Naive thymus-derived CD4-positive, alpha-beta T cell (primary cell): ENCODE measurements at regions of chr9 and their contacts with region 1.

Region 1: DNA sequence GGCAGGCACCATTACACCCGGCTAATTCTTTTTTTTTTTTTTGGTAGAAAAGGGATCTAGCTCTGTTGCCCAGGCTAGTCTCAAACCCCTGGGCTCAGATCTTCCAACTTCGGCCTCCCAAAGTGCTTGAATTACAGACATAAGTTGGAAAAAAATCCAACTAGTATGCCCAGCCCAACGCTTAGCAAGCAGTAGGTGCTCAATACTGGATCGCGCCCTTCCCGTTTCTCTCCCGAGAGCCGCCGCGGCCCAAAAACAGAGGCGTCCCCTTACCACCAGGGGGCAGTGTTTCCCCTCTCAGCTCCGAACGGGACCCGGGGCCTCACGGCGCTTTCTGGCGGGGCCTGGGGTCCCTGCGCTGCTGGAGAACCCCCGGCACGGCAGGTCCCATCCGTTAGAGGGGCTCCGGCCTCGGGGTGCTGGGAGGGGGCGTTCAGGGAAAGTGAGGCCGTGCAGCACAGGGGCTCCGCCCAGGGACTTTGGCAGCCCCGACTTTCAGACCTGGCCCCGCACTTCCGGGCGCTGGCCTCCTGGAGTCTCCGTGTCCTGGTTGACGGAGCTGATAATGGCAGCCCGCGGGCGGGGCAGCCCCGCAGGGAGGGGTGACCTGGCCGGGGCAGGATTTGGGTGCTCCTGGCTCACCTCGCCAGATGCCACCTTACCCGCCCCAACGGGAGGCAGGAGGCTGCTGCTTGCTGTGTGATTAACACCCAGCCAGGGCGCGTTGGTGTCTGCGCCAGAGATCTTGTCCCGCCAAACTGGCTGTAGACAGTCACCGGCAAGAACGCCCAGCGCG is 15.2 kb downstream of the PTGES start:
- DNase-seq: peak; percentile 73 to 95 (median 87)
- ATAC-seq: peak; percentile 96
- H3K4me3 ChIP-seq: peak overlapping the region; percentile 91
- H3K4me3 Mint-ChIP-seq: peak overlapping the region; percentile 66 to 84 (median 78)
- H3K27ac ChIP-seq: peak overlapping the region; percentile 76
- H3K27ac Mint-ChIP-seq: peak overlapping the region; percentile 50 to 94 (median 71)
- H3K4me1 ChIP-seq: peaks cover 6% of the 10 kb centered on the region in 2 donors
- H3K4me1 Mint-ChIP-seq: peaks cover 0 to 12% (median 8%) of the 10 kb centered on the region in 7 donors
- H3K27me3 ChIP-seq: no peaks in the 10 kb centered on the region
- H3K27me3 Mint-ChIP-seq: peaks cover 0 to 2% (median 0%) of the 10 kb centered on the region in 5 donors

Region 2: GRCh38 chr9:128972956-128973355 is 764.7 kb before region 1 on chr9:
- CTCF ChIA-PET with region 1: no interaction called
- POLR2A ChIA-PET with region 1: no interaction called
- intact Hi-C with region 1: no loop called
- DNase-seq: no peak
- ATAC-seq: no peak
- H3K4me3 ChIP-seq: no peak overlapping the region
- H3K4me3 Mint-ChIP-seq: no peak overlapping the region
- H3K27ac ChIP-seq: no peak overlapping the region
- H3K27ac Mint-ChIP-seq: peak overlapping the region in 1 of 9 donors; percentile 20
- H3K4me1 ChIP-seq: no peaks in the 10 kb centered on the region
- H3K4me1 Mint-ChIP-seq: peaks cover 0 to 10% (median 0%) of the 10 kb centered on the region in 7 donors
- H3K27me3 ChIP-seq: no peaks in the 10 kb centered on the region
- H3K27me3 Mint-ChIP-seq: no peaks in the 10 kb centered on the region

Region 3: GRCh38 chr9:129726322-129727160 is 11.1 kb before region 1 on chr9:
- CTCF ChIA-PET with region 1: interaction called, 19 read pairs
- POLR2A ChIA-PET with region 1: interaction called, 6 read pairs
- intact Hi-C with region 1: no loop called
- DNase-seq: peak; percentile 30 to 73 (median 56)
- ATAC-seq: peak; percentile 95
- H3K4me3 ChIP-seq: no peak overlapping the region
- H3K4me3 Mint-ChIP-seq: peak overlapping the region in 9 of 10 donors; percentile 16 to 63 (median 55)
- H3K27ac ChIP-seq: no peak overlapping the region
- H3K27ac Mint-ChIP-seq: no peak overlapping the region
- H3K4me1 ChIP-seq: no peaks in the 10 kb centered on the region
- H3K4me1 Mint-ChIP-seq: peaks cover 0 to 4% (median 3%) of the 10 kb centered on the region in 7 donors
- H3K27me3 ChIP-seq: no peaks in the 10 kb centered on the region
- H3K27me3 Mint-ChIP-seq: peaks cover 0 to 23% (median 5%) of the 10 kb centered on the region in 5 donors

Region 4: DNA sequence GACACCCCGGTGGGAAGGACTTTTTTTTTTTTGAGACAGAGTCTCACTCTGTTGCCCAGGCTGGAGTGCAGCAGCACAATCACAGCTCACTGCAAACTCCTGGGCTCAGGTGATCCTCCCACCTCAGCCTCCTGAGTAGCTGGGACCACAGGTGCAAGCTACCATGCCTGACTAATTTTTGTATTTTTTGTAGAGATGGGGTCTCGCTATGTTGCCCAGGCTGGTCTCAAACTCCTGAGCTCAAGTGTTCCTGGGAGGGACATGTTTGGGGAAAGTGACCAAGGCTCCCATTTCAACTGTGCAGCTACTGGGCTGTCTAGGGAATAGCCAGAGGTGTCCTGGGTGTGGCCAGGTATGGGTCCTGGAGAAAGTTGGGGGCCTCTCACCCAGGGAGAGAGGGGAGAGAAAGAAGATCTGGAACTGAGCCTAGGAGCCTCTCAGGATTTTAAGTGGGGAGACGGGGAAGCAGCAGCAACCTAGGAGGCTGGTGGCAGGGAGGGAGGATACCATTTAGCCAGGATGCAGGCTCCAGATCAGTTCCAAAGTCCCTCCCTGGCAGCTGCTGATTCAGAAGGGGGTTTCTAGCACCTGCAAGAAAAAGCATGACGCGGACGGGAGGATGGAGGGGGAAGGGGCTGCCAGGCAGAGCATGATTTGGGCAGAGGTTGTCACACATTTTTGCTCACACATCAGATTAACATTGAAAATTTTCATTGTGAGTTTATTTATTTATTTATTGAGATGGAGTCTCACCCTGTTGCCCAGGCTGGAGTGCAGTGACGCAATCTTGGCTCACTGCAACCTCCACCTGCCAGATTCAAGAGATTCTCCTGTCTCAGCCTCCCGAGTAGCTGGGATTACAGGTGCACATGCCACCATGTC is 58.6 kb after region 1 on chr9:
- CTCF ChIA-PET with region 1: interaction called, 4 read pairs
- POLR2A ChIA-PET with region 1: no interaction called
- intact Hi-C with region 1: loop called in 1 of 2 experiments (anchors 2 kb)
- DNase-seq: no peak
- ATAC-seq: no peak
- H3K4me3 ChIP-seq: no peak overlapping the region
- H3K4me3 Mint-ChIP-seq: no peak overlapping the region
- H3K27ac ChIP-seq: no peak overlapping the region
- H3K27ac Mint-ChIP-seq: no peak overlapping the region
- H3K4me1 ChIP-seq: no peaks in the 10 kb centered on the region
- H3K4me1 Mint-ChIP-seq: peaks cover 0 to 2% (median 0%) of the 10 kb centered on the region in 7 donors
- H3K27me3 ChIP-seq: no peaks in the 10 kb centered on the region
- H3K27me3 Mint-ChIP-seq: peaks cover 0 to 8% (median 0%) of the 10 kb centered on the region in 5 donors

Region 5: GRCh38 chr9:129835021-129835871 is 97.6 kb after region 1 on chr9 and contains the starts of genes C9orf78 and USP20:
- CTCF ChIA-PET with region 1: no interaction called
- POLR2A ChIA-PET with region 1: no interaction called
- intact Hi-C with region 1: no loop called
- DNase-seq: peak; percentile 95 to 99 (median 98)
- ATAC-seq: peak; percentile 98
- H3K4me3 ChIP-seq: peak within 1 kb of the TSS; percentile 96
- H3K4me3 Mint-ChIP-seq: peak within 1 kb of the TSS; percentile 86 to 99 (median 98)
- H3K27ac ChIP-seq: peak within 1 kb of the TSS; percentile 97
- H3K27ac Mint-ChIP-seq: peak within 1 kb of the TSS; percentile 91 to 99 (median 98)
- H3K4me1 ChIP-seq: peaks cover 36 to 50% of the 10 kb centered on the region in 2 donors
- H3K4me1 Mint-ChIP-seq: peaks cover 41 to 65% (median 57%) of the 10 kb centered on the region in 7 donors
- H3K27me3 ChIP-seq: no peaks in the 10 kb centered on the region
- H3K27me3 Mint-ChIP-seq: no peaks in the 10 kb centered on the region
- total RNA-seq, gene C9orf78: 66.2 to 118 (median 95.8) TPM
- total RNA-seq, gene USP20: 94.9 to 156 (median 118) TPM

Region 6: GRCh38 chr9:130095872-130096271 is 358.2 kb after region 1 on chr9:
- CTCF ChIA-PET with region 1: no interaction called
- POLR2A ChIA-PET with region 1: no interaction called
- intact Hi-C with region 1: loop called (anchors 1 to 5 kb)
- DNase-seq: no peak
- ATAC-seq: no peak
- H3K4me3 ChIP-seq: no peak overlapping the region
- H3K4me3 Mint-ChIP-seq: no peak overlapping the region
- H3K27ac ChIP-seq: no peak overlapping the region
- H3K27ac Mint-ChIP-seq: peak overlapping the region in 4 of 9 donors; percentile 16 to 59 (median 54)
- H3K4me1 ChIP-seq: no peaks in the 10 kb centered on the region
- H3K4me1 Mint-ChIP-seq: peaks cover 0 to 16% (median 5%) of the 10 kb centered on the region in 7 donors
- H3K27me3 ChIP-seq: no peaks in the 10 kb centered on the region
- H3K27me3 Mint-ChIP-seq: no peaks in the 10 kb centered on the region

Region 7: GRCh38 chr9:130235897-130236668 is 498.4 kb after region 1 on chr9:
- CTCF ChIA-PET with region 1: no interaction called
- POLR2A ChIA-PET with region 1: no interaction called
- intact Hi-C with region 1: loop called in 1 of 2 experiments (anchors 2 kb)
- DNase-seq: peak; percentile 41 to 79 (median 63)
- ATAC-seq: peak; percentile 79
- H3K4me3 ChIP-seq: no peak overlapping the region
- H3K4me3 Mint-ChIP-seq: peak overlapping the region in 7 of 10 donors; percentile 24 to 75 (median 54)
- H3K27ac ChIP-seq: no peak overlapping the region
- H3K27ac Mint-ChIP-seq: peak overlapping the region in 1 of 9 donors; percentile 43
- H3K4me1 ChIP-seq: peaks cover 7 to 11% of the 10 kb centered on the region in 2 donors
- H3K4me1 Mint-ChIP-seq: peaks cover 0 to 25% (median 15%) of the 10 kb centered on the region in 7 donors
- H3K27me3 ChIP-seq: no peaks in the 10 kb centered on the region
- H3K27me3 Mint-ChIP-seq: peaks cover 0 to 2% (median 0%) of the 10 kb centered on the region in 5 donors